Vagina (tissue), 2 donors: ENCODE measurements at regions of chr12 and their contacts with region 1.

Region 1: DNA sequence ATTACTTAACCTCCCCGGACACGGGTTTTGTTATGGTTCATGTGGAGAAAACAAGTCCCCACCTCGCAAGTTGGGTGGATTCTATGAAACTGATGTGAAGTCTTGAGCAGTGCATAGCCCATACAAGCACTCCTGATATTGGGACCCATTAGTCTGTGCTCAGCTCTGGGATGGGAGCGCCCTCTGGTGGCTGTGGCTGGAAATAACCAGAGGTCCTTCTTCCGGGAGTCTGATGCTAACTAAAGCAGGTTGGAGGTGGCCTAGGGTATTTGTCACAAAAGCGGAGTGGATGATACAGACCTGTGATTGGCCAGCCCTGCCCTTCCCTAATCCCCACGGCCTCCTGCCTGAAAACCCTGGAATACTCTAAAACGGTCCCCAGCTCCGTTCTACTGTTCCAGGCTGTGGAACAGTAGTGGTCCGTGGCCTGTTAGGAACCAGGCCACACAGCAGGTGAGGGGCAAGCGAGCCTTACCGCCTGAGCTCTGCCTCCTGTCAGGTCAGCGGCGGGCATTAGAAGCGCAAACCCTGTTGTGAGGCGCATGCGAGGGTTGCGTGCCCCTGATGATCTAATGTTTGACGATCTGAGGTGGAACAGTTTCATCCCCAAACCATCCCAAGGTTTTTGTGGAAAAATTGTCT is 6.4 kb downstream of the SLC48A1 start:
- DNase-seq: no peak
- H3K4me3 ChIP-seq: no peak overlapping the region
- H3K27ac ChIP-seq: peak overlapping the region; percentile 47
- H3K4me1 ChIP-seq: peaks cover 71% of the 10 kb centered on the region
- H3K27me3 ChIP-seq: no peaks in the 10 kb centered on the region
- CTCF ChIP-seq: peak; percentile 87 to 98 (median 98)
- POLR2A ChIP-seq: no peak

Region 2: GRCh38 chr12:47715393-47715876 is 64.0 kb before region 1 on chr12:
- intact Hi-C with region 1: loop called (anchors 5 kb)
- DNase-seq: peak in 1 of 2 donors; percentile 77
- H3K4me3 ChIP-seq: peak overlapping the region in 1 of 2 donors; percentile 17
- H3K27ac ChIP-seq: peak overlapping the region; percentile 86
- H3K4me1 ChIP-seq: peaks cover 44% of the 10 kb centered on the region
- H3K27me3 ChIP-seq: no peaks in the 10 kb centered on the region
- CTCF ChIP-seq: peak; percentile 75 to 89 (median 76)
- POLR2A ChIP-seq: no peak

Region 3: DNA sequence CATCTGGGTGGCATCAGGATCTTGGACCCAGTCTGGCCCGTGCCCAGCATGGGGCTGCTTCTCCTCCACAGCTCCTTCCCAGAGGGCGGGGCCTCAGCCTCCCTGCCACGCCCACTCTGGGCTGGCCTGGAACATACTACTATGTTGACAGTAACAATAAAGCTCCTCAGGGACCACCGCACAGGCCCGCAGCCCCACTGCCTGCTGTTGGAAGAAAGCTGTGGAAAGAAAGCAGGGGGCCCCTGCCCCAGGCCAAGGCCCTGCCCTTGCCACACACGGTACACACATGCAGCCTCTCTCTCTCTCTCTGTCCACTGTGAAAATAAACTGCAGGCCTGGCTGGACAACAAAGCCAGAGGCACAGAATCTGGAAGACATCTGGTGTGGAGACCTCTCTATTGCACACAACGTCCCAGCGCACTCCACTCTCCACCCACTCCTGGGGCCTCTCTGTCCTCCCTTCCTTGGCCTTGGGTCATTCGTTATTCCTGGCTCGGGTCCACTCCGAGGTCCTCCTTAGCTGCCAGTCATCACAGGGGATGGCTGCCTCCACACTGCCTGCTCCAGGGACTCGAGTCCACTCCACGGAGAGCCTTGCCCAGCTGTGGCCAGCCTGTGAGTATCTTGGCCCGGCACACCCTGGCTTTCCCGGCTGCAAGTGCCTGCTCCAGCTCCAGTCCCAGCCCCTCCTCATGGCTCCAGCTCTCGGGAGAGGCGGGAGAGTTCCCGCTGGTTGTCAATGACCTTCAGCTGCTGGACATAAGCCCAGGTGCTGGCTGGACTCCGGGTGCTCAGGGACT is 42.3 kb before region 1 on chr12:
- intact Hi-C with region 1: loop called (anchors 5 kb)
- DNase-seq: peak in 1 of 2 donors; percentile 96
- H3K4me3 ChIP-seq: peak overlapping the region in 1 of 2 donors; percentile 10
- H3K27ac ChIP-seq: peak overlapping the region; percentile 86
- H3K4me1 ChIP-seq: peaks cover 69% of the 10 kb centered on the region
- H3K27me3 ChIP-seq: no peaks in the 10 kb centered on the region
- CTCF ChIP-seq: peak in 1 of 3 experiments; percentile 10
- POLR2A ChIP-seq: no peak

Region 4: DNA sequence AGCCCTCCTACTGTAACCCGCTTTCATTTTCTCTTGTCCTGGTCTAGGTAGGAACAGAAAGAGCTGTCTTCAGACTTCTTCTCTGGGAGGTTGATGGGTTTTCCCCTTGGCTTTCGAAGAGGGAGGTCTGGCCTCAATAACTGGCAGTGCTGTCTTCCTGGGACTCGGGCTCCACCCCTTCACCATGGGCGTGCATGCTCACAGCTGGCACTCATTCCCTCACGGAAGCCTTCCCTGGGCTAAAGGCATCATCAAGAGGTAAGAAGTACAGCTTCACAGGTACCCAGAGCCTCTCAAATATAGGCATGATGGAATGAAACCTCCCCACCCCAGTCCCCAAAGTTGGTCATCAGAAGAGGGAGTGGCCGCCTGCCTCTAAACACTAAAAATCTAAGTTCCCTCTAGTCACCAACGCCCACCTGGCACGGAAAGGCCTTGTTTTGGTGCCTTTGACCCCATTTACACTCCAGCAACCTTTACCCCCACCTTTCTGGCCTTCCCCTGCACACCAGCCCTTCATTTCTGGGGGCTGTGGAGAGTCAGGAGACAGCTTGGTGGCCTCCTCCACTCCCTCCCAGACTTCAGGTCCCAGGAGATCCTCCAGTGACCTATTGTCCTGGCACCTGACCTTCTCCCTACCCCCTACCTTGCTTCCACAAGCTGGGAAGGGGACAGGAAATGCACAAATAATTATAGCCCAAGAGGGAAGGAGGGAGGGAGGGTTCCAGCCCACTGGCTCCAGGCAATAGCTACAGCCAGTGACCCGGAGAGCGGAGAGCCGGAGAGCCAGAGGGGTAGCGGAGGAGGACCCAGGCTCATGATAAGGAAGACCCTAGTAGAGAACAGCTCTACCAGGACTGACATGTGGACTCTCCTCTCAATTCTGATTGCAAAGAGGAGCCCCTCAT is 23.5 kb before region 1 on chr12:
- intact Hi-C with region 1: no loop called
- DNase-seq: no peak
- H3K4me3 ChIP-seq: peak overlapping the region; percentile 13 to 50
- H3K27ac ChIP-seq: peak overlapping the region; percentile 66
- H3K4me1 ChIP-seq: peaks cover 83% of the 10 kb centered on the region
- H3K27me3 ChIP-seq: no peaks in the 10 kb centered on the region
- CTCF ChIP-seq: no peak
- POLR2A ChIP-seq: no peak

Region 5: GRCh38 chr12:47828608-47829536 is 49.5 kb after region 1 on chr12:
- intact Hi-C with region 1: loop called (anchors 5 kb)
- DNase-seq: no peak
- H3K4me3 ChIP-seq: no peak overlapping the region
- H3K27ac ChIP-seq: peak overlapping the region; percentile 99
- H3K4me1 ChIP-seq: peaks cover 63% of the 10 kb centered on the region
- H3K27me3 ChIP-seq: no peaks in the 10 kb centered on the region
- CTCF ChIP-seq: no peak
- POLR2A ChIP-seq: no peak

Region 6: GRCh38 chr12:47837190-47838171 is 58.1 kb after region 1 on chr12:
- intact Hi-C with region 1: loop called (anchors 2 kb)
- DNase-seq: no peak
- H3K4me3 ChIP-seq: no peak overlapping the region
- H3K27ac ChIP-seq: no peak overlapping the region
- H3K4me1 ChIP-seq: peaks cover 8% of the 10 kb centered on the region
- H3K27me3 ChIP-seq: no peaks in the 10 kb centered on the region
- CTCF ChIP-seq: peak; percentile 85 to 97 (median 95)
- POLR2A ChIP-seq: no peak